PC-9 (cell line): ENCODE measurements at regions of chr9 and their contacts with region 1.

Region 1: GRCh38 chr9:76114144-76114543 is 223.7 kb downstream of the PCSK5 start:
- DNase-seq: no peak
- H3K4me3 ChIP-seq: no peak overlapping the region
- H3K27ac ChIP-seq: no peak overlapping the region
- H3K4me1 ChIP-seq: 0 out of 2 replicates have a peak, but pooled peaks cover 7% of the 10 kb centered on the region
- H3K27me3 ChIP-seq: no peaks in the 10 kb centered on the region
- CTCF ChIP-seq: no peak

Region 2: GRCh38 chr9:76095585-76095984 is 18.6 kb before region 1 on chr9:
- CTCF ChIA-PET with region 1: interaction called, 5 read pairs
- POLR2A ChIA-PET with region 1: interaction called, 21 read pairs
- intact Hi-C with region 1: no loop called
- DNase-seq: no peak
- H3K4me3 ChIP-seq: no peak overlapping the region
- H3K27ac ChIP-seq: no peak overlapping the region
- H3K4me1 ChIP-seq: no peaks in the 10 kb centered on the region
- H3K27me3 ChIP-seq: no peaks in the 10 kb centered on the region
- CTCF ChIP-seq: no peak

Region 3: GRCh38 chr9:76161541-76161940 is 47.4 kb after region 1 on chr9:
- CTCF ChIA-PET with region 1: no interaction called
- POLR2A ChIA-PET with region 1: no interaction called
- intact Hi-C with region 1: no loop called
- DNase-seq: no peak
- H3K4me3 ChIP-seq: no peak overlapping the region
- H3K27ac ChIP-seq: no peak overlapping the region
- H3K4me1 ChIP-seq: no peaks in the 10 kb centered on the region
- H3K27me3 ChIP-seq: no peaks in the 10 kb centered on the region
- CTCF ChIP-seq: no peak